Posterior cingulate gyrus (tissue), 11 donors: ENCODE measurements at regions of chrX and their contacts with region 1.

Region 1: DNA sequence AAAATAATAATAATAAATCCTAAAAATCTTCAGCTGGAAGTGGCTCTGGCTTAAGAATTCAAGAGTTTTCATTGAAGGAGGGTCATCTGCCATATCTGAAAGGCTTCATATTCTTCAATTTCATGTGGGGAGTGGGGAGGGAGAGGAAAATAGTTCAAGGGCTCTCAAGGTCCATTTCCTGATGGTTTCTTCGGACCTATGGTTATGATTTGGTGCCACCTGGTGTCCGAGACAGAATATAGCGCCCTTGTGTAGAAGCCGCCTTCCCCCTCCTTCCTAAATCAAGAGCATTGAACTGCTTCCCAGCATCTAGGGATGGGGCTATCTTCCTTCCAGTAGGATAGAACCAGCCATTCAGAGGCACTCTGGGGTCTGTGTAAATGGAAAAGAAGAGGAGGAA is 34.3 kb downstream of the NLGN3 start:
- DNase-seq: peak in 6 of 10 donors; percentile 41 to 90 (median 52)

Region 2: DNA sequence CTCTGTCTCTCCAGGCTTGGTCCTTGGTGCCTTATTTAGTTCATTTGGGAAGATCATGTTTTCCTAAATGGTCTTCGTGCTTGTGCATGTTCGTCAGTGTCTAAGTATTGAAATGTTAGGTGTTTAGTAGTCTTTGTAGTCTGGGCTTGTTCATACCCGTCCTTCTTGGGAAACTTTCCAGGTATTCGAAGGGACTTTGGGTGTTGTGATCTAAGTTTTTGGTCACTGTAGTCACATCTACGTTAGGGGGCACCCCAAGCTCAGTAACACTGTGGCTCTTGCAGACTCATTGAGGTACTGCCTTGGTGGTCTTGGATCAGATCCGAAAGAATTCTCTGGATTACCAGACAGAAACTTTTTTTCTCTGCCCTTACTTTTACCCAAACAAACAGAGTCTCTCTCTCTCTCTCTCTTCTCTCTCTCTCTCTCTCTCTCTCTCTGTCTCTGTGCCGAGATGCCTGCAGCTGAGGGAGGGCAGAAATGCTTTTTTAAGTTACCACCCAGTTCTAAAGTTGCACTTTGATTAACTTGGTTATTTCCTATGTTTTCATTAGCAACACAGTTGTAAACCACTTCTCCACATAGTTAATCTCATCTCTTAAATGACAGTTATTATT is 180.4 kb before region 1 on chrX:
- intact Hi-C with region 1: loop called (anchors 2 kb)
- DNase-seq: peak in 3 of 10 donors; percentile 12 to 45 (median 29)

Region 3: DNA sequence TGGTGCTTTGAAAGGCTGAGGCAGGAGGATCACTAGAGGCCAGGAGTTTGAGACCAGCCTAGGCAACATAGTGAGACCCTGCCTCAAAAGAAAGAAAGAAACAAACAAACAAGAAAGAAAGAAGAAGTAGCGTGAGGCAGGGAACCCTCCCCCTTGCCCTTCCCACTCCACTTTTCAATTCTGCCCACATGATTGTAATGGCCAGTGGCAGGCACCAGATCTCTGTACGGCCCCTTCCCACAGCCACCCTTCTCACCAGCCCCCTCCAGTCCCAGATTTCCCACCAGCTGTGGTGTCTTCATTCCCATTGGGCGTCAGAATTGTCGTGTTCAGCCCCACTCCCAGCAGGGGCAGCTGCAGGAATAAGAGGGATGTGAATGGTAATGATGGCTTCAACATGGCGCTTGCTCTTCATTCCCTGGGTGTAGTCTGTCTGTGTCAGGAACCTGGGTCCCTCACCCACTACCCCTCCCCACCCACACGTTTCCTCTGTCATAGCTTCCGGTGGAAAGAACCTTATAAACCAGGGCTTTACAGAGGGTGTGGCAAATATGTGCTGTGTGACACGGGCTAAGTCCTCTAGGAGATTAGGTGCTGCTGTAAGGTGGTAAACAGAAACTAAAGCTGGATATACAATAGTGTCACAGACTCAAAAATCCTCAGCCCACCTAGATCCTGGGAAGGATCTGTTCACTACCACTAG is 67.6 kb before region 1 on chrX and contains the start of gene IL2RG:
- intact Hi-C with region 1: no loop called
- DNase-seq: no peak